Posterior cingulate gyrus (tissue), 11 donors: ENCODE measurements at regions of chr4 and their contacts with region 1.

Region 1: DNA sequence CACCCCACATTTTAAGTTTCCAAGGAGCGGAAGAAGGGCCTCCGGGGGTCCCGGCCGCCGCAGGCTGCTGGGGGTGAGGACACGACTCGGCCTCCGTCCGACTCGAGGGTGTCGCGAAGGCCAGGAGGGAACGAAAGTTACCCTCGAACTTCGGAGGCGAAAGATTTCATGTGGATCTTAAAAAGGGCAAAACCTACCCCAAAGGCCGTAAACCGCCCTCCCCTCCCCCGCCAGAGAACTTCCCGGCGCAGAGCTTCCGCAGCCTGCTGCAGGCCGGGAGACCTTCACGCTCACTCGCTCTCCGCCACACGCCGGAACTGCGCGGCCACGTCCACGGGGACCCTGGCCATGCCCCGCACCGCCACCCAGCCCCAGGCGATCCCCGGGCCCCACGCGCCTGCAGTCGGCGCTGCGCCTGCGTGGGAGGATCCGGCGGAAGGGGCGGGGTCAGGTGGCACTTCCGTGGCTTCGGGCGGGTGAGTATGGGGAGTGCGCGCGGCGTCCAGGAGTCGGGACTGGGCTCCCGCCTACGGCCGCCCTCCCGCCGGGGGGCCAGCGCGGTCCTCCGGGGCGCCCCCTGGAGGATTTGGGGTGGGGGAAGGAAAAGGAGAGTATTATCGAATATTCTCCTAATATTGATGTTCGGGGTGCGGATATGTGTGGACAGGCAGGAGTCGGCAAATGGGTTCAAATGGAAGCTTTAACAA is at the start of gene MMAA:
- DNase-seq: peak; percentile 90 to 99 (median 94)

Region 2: DNA sequence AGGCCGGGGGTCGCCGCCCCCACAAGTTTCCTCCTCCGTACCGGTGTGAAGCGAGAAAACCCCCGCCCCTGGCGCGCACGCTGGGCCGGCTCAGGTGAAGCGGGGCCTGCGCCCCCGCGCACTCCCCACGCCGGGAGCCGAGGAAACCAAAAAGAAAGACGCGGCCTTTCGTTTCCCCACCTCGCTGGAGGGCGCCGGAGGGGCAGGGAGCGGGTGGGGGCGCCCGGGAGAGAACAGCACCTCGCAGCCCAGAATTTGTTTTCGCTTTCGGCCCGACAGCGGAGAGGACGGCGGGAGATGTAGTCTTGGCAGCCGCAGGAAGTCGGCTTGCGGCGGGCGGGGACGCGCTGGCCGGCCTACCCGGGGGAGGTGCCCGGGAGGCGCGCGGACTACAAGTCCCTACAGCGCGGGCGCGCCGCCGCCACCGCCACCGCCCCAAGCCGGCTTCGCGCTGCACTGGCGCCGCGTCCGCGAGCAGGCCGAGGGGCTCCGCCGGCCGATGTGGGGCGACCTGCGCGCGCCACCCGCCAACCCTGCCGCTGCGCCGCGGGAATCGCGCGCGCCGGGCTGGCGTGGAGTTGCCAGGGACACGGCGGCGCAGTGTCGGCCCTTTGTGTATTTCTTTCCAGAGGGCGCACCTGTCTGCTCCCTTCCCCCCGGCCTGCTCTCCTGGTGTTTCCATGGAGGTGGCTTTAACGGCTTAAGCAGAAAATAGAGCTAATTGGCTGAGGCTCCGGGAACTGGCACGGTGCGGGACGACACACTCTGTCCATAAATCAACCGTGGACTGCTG is 438.6 kb before region 1 on chr4 and contains the start of gene OTUD4:
- intact Hi-C with region 1: loop called (anchors 2 kb)
- DNase-seq: peak; percentile 89 to 99 (median 95)

Region 3: GRCh38 chr4:145234091-145234706 is 384.9 kb before region 1 on chr4:
- intact Hi-C with region 1: loop called (anchors 5 kb)
- DNase-seq: peak in 6 of 10 donors; percentile 25 to 87 (median 52)

Region 4: GRCh38 chr4:145829629-145830395 is 210.7 kb after region 1 on chr4:
- intact Hi-C with region 1: loop called (anchors 10 kb)
- DNase-seq: no peak